K562 (cell line): ENCODE measurements at regions of chr6 and their contacts with region 1.

Region 1: GRCh38 chr6:45922728-45923351 is 92.8 kb downstream of the CLIC5 start:
- DNase-seq: peak; percentile 42 to 62 (median 46)
- ATAC-seq: peak; percentile 86
- H3K4me3 ChIP-seq: no peak overlapping the region
- H3K27ac ChIP-seq: no peak overlapping the region
- H3K4me1 ChIP-seq: no peaks in the 10 kb centered on the region
- H3K27me3 ChIP-seq: no peaks in the 10 kb centered on the region; a peak in 1 of 5 replicates
- CTCF ChIP-seq: peak; percentile 69 to 91 (median 80)
- EP300 ChIP-seq: no peak
- POLR2A ChIP-seq: no peak
- RAD21 ChIP-seq: peak; percentile 87 to 93

Region 2: DNA sequence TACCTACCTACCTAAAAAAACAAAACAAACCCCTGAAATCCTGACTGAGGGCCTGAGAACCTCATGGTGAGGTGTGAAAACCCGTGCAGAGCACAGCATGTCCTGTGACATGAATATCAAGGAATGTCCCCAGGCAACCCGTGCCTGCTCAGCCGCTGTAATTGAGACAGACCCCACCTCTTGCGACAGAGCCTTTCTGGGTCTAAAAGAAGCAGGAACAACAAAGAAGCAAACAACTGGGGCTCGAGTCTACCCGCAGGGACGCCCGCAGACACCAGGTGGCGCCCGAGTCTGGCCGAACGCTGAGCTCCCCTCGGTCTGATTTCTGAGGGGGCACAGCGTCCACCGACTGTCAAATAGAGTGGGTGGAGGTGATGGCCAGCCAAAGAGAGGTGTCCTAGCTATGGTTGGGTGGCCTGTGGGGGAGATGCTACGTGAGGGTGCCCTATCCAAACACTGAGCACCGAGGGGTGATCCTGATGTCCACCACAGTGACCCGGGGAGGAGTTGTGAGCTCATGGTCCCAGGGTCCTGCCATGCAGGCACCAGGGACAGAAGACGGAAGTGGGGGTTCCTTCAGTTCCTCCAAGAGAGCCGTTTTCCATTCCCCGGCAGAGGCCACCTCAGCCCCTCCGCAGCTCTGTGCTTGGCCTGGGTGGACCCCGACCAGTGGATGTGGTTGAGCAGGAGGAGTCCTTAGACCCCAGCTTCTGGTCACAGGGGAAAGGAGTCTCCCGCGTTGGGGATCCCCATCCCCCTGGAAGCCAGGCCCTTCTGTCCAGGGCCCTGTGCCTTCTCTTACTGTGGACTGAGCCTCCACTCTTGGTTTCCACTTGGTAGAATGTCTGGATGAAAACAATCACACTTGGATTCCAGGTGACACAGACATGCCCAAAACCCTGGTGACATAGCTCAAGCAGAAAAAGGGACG is 1267.2 kb before region 1 on chr6:
- CTCF ChIA-PET with region 1: interaction called, 19 read pairs
- POLR2A ChIA-PET with region 1: no interaction called
- in situ Hi-C with region 1: loop called (anchors 10 kb)
- intact Hi-C with region 1: loop called (anchors 1 kb)
- DNase-seq: peak; percentile 72 to 81 (median 76)
- ATAC-seq: peak; percentile 93
- H3K4me3 ChIP-seq: no peak overlapping the region
- H3K27ac ChIP-seq: no peak overlapping the region
- H3K4me1 ChIP-seq: 0 out of 5 replicates have a peak, but pooled peaks cover 0 to 4% of the 10 kb centered on the region in 2 experiments
- H3K27me3 ChIP-seq: peaks cover 18 to 79% of the 10 kb centered on the region in 2 experiments
- CTCF ChIP-seq: peak; percentile 90 to 99 (median 93)
- EP300 ChIP-seq: no peak
- POLR2A ChIP-seq: no peak
- RAD21 ChIP-seq: peak; percentile 97 to 98

Region 3: DNA sequence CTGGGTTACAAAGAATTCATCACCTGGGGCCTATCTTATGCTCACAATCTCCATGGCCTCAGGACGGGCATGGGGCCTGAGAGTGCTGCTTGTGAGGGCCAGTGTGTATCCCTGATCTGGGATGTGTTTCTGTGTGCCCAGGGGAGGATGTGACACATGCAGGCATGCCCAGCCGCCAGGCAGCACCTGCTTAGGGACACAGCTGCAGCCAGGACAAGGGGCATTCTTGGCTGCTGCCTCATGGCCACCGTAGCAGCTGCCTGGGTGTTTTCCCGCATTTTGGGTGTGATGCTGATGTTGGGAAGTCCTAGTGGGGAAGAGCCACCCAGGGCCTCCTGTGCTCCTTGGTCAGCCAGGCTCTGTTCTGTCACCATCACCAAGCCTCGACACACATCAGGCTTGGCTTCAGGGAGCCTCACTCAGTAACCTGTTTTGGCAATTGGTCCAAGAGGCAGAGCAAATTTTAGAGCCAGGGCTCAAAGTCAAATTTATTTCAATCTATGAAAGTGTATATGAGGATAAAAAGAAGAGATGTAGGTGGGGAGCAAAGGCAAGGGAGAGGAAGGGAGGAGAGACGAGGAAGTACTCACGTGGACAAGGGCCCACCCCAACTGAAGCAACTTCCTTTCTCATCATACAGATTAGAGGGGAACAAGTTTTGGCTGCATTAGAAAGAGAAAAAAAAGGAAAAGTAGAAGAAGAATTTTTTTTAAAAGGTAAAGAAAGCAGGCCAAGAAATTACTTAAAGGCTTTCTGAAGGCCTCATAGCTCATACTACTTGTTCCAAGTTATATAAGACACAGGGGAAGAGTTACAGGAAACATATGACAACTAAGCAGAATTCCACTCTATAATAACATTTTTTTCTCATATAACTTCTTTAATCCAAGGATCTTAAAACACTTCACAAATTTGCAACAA is 275.2 kb before region 1 on chr6:
- CTCF ChIA-PET with region 1: no interaction called
- POLR2A ChIA-PET with region 1: no interaction called
- in situ Hi-C with region 1: no loop called
- intact Hi-C with region 1: loop called (anchors 10 kb)
- DNase-seq: no peak
- ATAC-seq: no peak
- H3K4me3 ChIP-seq: no peak overlapping the region
- H3K27ac ChIP-seq: no peak overlapping the region
- H3K4me1 ChIP-seq: no peaks in the 10 kb centered on the region
- H3K27me3 ChIP-seq: peaks cover 18 to 37% of the 10 kb centered on the region in 2 experiments
- CTCF ChIP-seq: no peak
- EP300 ChIP-seq: no peak
- POLR2A ChIP-seq: no peak
- RAD21 ChIP-seq: no peak

Region 4: GRCh38 chr6:45854149-45854742 is 68.6 kb before region 1 on chr6:
- CTCF ChIA-PET with region 1: no interaction called
- POLR2A ChIA-PET with region 1: no interaction called
- in situ Hi-C with region 1: no loop called
- intact Hi-C with region 1: no loop called
- DNase-seq: no peak
- ATAC-seq: no peak
- H3K4me3 ChIP-seq: no peak overlapping the region
- H3K27ac ChIP-seq: no peak overlapping the region
- H3K4me1 ChIP-seq: no peaks in the 10 kb centered on the region
- H3K27me3 ChIP-seq: no peaks in the 10 kb centered on the region
- CTCF ChIP-seq: no peak
- EP300 ChIP-seq: no peak
- POLR2A ChIP-seq: no peak
- RAD21 ChIP-seq: no peak

Region 5: GRCh38 chr6:45880159-45880558 is 42.7 kb before region 1 on chr6:
- CTCF ChIA-PET with region 1: no interaction called
- POLR2A ChIA-PET with region 1: no interaction called
- in situ Hi-C with region 1: no loop called
- intact Hi-C with region 1: no loop called
- DNase-seq: no peak
- ATAC-seq: no peak
- H3K4me3 ChIP-seq: no peak overlapping the region
- H3K27ac ChIP-seq: no peak overlapping the region
- H3K4me1 ChIP-seq: no peaks in the 10 kb centered on the region; a peak in 1 of 5 replicates
- H3K27me3 ChIP-seq: peaks cover 0 to 3% of the 10 kb centered on the region in 2 experiments; a peak in 1 of 5 replicates
- CTCF ChIP-seq: no peak
- EP300 ChIP-seq: no peak
- POLR2A ChIP-seq: no peak
- RAD21 ChIP-seq: no peak

Region 6: GRCh38 chr6:46053039-46053933 is 130.4 kb after region 1 on chr6:
- CTCF ChIA-PET with region 1: no interaction called
- POLR2A ChIA-PET with region 1: no interaction called
- in situ Hi-C with region 1: no loop called
- intact Hi-C with region 1: no loop called
- DNase-seq: no peak
- ATAC-seq: no peak
- H3K4me3 ChIP-seq: no peak overlapping the region
- H3K27ac ChIP-seq: no peak overlapping the region
- H3K4me1 ChIP-seq: no peaks in the 10 kb centered on the region
- H3K27me3 ChIP-seq: no peaks in the 10 kb centered on the region
- CTCF ChIP-seq: no peak
- EP300 ChIP-seq: no peak
- POLR2A ChIP-seq: no peak
- RAD21 ChIP-seq: no peak

Region 7: GRCh38 chr6:46090115-46091079 is 167.6 kb after region 1 on chr6:
- CTCF ChIA-PET with region 1: no interaction called
- POLR2A ChIA-PET with region 1: no interaction called
- in situ Hi-C with region 1: no loop called
- intact Hi-C with region 1: no loop called
- DNase-seq: peak; percentile 65 to 75 (median 70)
- ATAC-seq: peak; percentile 86
- H3K4me3 ChIP-seq: no peak overlapping the region
- H3K27ac ChIP-seq: no peak overlapping the region
- H3K4me1 ChIP-seq: no peaks in the 10 kb centered on the region
- H3K27me3 ChIP-seq: no peaks in the 10 kb centered on the region
- CTCF ChIP-seq: peak; percentile 68 to 81 (median 73)
- EP300 ChIP-seq: no peak
- POLR2A ChIP-seq: no peak
- RAD21 ChIP-seq: peak; percentile 57 to 70